B cell (primary cell): ENCODE measurements at regions of chr13 and their contacts with region 1.

Region 1: DNA sequence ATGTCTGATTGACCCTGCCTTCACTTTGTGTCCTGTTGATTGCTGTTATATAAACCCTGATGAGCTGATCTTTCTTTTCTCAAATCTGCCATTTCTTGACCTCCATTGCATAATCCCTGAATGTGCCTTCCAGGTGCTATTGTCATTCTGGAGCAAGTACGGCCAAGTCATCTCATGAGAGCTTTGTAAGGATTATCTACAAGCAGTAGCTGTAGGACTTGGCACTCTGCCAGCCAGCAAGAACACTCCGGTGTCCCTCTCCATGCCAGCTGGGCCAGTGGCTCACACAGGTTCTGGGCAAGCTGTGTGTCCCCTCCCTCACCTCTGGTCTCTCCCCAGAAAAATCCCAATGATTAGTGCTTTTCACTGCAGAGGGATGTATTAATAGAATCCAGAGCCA is 348.1 kb downstream of the FOXO1 start:
- DNase-seq: peak; percentile 21
- ATAC-seq: no peak
- H3K4me3 ChIP-seq: no peak overlapping the region
- H3K4me3 Mint-ChIP-seq: no peak overlapping the region
- H3K27ac ChIP-seq: no peak overlapping the region
- H3K27ac Mint-ChIP-seq: no peak overlapping the region
- H3K4me1 ChIP-seq: peaks cover 11 to 12% of the 10 kb centered on the region in 2 donors
- H3K4me1 Mint-ChIP-seq: peaks cover 33% of the 10 kb centered on the region
- H3K27me3 ChIP-seq: no peaks in the 10 kb centered on the region
- H3K27me3 Mint-ChIP-seq: no peaks in the 10 kb centered on the region
- CTCF ChIP-seq: no peak

Region 2: DNA sequence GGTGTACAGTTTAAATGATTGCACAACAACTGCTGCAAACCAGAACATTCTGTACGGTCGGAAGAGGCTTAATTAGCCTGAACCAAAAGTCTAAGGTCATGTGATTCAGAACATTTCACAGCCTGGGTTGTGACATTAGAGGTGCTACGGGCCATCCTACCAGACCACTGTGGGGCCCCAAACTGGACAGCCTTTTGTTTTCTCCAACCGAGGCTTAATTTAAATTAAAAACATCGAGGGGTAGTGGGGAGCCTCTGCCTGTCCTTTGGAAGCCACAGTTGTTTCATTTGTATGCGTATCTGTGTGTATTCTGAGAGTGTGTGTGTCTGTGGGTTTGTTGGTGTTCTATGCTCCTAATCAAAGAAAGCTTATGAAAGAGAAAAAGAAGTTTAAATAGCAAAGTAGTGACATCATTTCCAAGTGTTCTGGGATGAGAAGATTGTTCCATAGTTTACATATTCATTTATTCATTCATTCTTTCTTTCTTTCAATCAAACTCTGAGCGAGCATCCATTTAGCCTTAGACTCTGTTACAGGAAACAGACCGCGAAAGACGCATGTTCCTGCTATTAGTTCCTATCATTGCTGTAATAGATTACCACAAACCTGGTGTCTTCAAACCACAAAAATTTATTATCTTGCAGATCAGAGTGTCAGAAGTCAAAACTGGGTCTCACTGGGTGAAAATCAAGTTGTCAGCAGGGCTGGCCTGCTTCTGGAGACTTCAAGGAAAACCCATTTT is 96.7 kb before region 1 on chr13:
- CTCF ChIA-PET with region 1: no interaction called
- POLR2A ChIA-PET with region 1: no interaction called
- intact Hi-C with region 1: loop called (anchors 10 kb)
- DNase-seq: no peak
- ATAC-seq: no peak
- H3K4me3 ChIP-seq: no peak overlapping the region
- H3K4me3 Mint-ChIP-seq: no peak overlapping the region
- H3K27ac ChIP-seq: no peak overlapping the region
- H3K27ac Mint-ChIP-seq: no peak overlapping the region
- H3K4me1 ChIP-seq: peaks cover 5 to 9% of the 10 kb centered on the region in 2 donors
- H3K4me1 Mint-ChIP-seq: peaks cover 13% of the 10 kb centered on the region
- H3K27me3 ChIP-seq: no peaks in the 10 kb centered on the region
- H3K27me3 Mint-ChIP-seq: no peaks in the 10 kb centered on the region
- CTCF ChIP-seq: no peak

Region 3: GRCh38 chr13:40629678-40630384 is 311.5 kb after region 1 on chr13:
- CTCF ChIA-PET with region 1: no interaction called
- POLR2A ChIA-PET with region 1: no interaction called
- intact Hi-C with region 1: no loop called
- DNase-seq: peak; percentile 68
- ATAC-seq: peak; percentile 73
- H3K4me3 ChIP-seq: peak overlapping the region in 2 of 5 experiments; percentile 6 to 37
- H3K4me3 Mint-ChIP-seq: peak overlapping the region; percentile 66
- H3K27ac ChIP-seq: peak overlapping the region; percentile 74 to 80
- H3K27ac Mint-ChIP-seq: peak overlapping the region; percentile 80
- H3K4me1 ChIP-seq: peaks cover 69 to 76% of the 10 kb centered on the region in 2 donors
- H3K4me1 Mint-ChIP-seq: peaks cover 80% of the 10 kb centered on the region
- H3K27me3 ChIP-seq: no peaks in the 10 kb centered on the region
- H3K27me3 Mint-ChIP-seq: no peaks in the 10 kb centered on the region
- CTCF ChIP-seq: no peak